Ascending aorta (tissue), 2 donors: ENCODE measurements at regions of chr7 and their contacts with region 1.

Region 1: DNA sequence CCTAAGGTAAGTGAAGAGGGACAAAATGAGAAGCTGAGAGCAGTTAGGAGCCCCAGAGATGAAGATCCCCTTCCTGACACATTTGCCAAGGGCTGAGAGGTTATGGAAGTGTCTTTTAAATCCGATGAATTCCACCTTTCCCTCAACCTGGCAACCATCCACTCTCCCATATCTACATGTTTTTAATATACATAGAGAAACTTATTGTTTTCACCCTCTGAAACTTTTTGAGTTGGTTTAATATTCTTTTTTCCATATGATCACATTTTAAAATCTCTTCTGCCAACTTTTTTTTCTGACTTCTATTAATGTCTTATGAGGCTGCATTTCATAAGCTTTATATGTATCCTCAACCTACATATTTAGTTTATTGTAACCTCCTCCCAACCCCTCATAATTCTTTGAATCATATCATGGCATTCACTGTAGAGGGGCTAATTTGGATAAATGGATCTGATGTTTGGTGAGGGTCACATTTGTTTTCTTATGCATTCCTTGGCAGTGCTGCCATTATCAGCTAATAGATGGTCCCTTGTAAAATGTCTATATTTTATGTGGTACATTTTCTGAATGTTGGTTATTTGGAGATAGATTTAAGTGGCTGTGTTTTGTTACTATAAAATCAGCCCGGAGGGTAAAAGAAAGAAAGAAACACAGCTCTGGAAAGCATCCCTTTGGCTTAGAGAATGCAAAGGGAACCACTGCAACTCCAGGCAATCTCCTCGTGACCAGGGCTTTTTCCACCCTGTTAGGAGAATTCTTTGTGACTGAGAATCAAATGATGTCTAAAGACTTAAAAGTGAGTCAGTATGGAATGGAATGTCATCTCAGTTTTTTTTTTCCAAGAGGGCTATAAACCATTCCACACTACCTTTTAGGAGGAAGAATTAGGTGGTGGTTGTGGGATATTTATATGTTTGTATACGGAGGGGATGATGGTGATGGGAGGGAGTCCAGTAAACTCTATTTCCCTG is 334.4 kb downstream of the SUGCT start:
- DNase-seq: peak in 1 of 2 donors; percentile 74
- H3K4me3 ChIP-seq: no peak overlapping the region
- H3K27ac ChIP-seq: peak overlapping the region; percentile 90 to 93
- H3K4me1 ChIP-seq: peaks cover 0 to 24% of the 10 kb centered on the region in 2 donors
- H3K27me3 ChIP-seq: no peaks in the 10 kb centered on the region
- CTCF ChIP-seq: no peak

Region 2: DNA sequence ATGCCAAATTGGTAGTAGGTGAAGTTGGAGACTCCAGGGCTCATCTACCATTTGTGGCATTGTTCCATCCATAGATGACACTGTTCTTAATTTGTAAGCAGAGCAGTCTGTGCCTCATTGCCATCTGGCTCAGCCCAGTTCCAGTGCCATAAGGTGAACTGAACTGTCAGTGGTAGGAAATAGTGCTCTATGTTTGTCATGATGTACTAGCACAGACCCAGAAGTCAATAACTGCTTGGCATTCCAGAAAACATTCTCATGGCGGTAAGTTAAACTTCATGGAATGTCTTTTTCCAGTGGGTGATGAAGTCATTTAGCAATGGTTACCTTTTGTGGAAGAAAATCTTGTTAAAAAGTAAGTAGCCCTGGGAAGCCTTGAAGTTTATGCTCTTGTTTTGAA is 31.7 kb before region 1 on chr7:
- intact Hi-C with region 1: loop called (anchors 2 kb)
- DNase-seq: peak in 1 of 2 donors; percentile 83
- H3K4me3 ChIP-seq: no peak overlapping the region
- H3K27ac ChIP-seq: peak overlapping the region; percentile 81 to 88
- H3K4me1 ChIP-seq: peaks cover 0 to 20% of the 10 kb centered on the region in 2 donors
- H3K27me3 ChIP-seq: no peaks in the 10 kb centered on the region
- CTCF ChIP-seq: no peak

Region 3: GRCh38 chr7:40507166-40507565 is 38.0 kb after region 1 on chr7:
- intact Hi-C with region 1: loop called (anchors 2 kb)
- DNase-seq: no peak
- H3K4me3 ChIP-seq: no peak overlapping the region
- H3K27ac ChIP-seq: no peak overlapping the region
- H3K4me1 ChIP-seq: peaks cover 0 to 3% of the 10 kb centered on the region in 2 donors
- H3K27me3 ChIP-seq: no peaks in the 10 kb centered on the region
- CTCF ChIP-seq: no peak

Region 4: GRCh38 chr7:40570223-40570622 is 101.0 kb after region 1 on chr7:
- intact Hi-C with region 1: no loop called
- DNase-seq: no peak
- H3K4me3 ChIP-seq: no peak overlapping the region
- H3K27ac ChIP-seq: no peak overlapping the region
- H3K4me1 ChIP-seq: peaks cover 0 to 8% of the 10 kb centered on the region in 2 donors
- H3K27me3 ChIP-seq: no peaks in the 10 kb centered on the region
- CTCF ChIP-seq: no peak

Region 5: DNA sequence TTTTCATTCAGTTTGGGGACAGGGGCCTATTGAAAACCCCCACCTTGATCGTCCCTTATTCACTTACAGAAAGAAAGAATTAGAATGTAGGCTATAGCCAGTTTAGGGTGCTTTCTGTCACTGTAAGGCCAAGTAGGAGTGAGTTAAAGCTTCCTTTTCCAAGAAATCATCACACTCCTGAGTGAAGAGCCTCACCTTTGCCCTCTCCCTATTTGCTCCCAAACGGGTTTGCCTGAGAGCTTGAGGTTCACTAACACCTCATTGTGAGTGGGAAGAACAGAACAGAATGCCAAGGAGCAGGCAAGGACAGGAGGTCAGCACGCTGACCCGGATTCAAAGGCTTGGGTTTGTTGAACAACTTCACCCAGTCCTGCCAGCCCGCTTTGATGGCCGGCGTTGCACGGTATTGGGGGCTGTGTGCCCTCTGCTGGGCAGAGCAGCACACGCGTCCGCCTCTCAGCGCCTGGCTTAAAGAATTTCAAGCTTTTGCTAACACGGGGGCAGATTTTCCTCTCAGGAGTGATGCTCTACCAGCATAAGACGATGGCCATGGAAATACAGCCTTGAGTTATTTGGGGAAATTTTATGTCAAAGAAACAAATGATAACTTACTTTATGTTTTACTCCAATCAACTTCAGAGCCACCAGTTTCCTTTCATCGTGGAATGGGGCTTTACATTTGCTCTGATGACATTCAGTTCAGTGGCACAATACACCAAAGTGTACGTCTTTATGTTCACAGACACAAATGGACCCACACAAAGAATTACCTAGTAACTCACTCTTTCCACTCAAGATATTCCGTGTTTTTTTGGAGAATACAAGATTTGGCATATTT is 135.6 kb after region 1 on chr7:
- intact Hi-C with region 1: loop called (anchors 5 kb)
- DNase-seq: peak in 1 of 2 donors; percentile 74
- H3K4me3 ChIP-seq: peak overlapping the region; percentile 3 to 5
- H3K27ac ChIP-seq: no peak overlapping the region
- H3K4me1 ChIP-seq: peaks cover 0 to 8% of the 10 kb centered on the region in 2 donors
- H3K27me3 ChIP-seq: no peaks in the 10 kb centered on the region
- CTCF ChIP-seq: peak; percentile 54 to 72 (median 61)